HEK293 (cell line): ENCODE measurements at regions of chr11 and their contacts with region 1.

Region 1: DNA sequence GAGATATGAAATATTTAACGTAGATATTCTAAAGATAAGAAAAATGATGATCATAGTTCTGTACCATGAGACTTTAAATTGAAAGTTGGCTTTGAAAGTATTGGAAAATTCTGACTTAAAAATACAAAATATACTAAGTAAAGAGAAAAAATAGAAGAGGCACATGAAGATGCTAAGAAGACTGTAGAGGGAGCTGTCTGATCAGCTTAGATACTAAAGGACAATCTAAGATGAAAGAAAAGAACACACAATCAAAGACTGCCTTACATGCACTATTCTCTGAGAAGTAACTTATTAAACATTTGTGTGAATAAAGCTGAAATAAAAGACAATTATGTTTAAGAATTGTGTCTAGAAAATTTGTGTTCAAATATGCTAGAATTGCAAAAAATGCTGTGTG is 55.1 kb downstream of the RBMXL2 start:
- H3K4me3 ChIP-seq: no peak overlapping the region
- H3K27ac ChIP-seq: no peak overlapping the region
- H3K4me1 ChIP-seq: no peaks in the 10 kb centered on the region
- CTCF ChIP-seq: no peak

Region 2: DNA sequence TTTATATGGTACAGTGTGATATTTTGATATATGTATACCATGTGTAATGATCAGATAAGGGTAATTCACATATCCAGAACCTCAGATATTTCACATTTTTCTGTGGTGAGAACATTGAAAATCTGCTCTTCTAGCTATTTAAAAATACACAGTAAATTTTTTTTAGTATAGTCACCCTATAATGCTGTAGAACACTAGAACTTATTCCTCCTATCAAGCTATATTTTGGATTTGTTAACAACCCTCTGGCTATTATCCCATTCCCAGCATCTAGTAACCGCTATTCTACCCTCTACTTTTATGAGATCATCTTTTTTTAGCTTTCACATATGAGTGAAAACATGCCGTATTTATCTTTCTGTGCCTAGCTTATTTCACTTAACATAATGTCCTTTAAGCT is 42.3 kb after region 1 on chr11:
- CTCF ChIA-PET with region 1: no interaction called
- POLR2A ChIA-PET with region 1: no interaction called
- H3K4me3 ChIP-seq: no peak overlapping the region
- H3K27ac ChIP-seq: no peak overlapping the region
- H3K4me1 ChIP-seq: no peaks in the 10 kb centered on the region
- CTCF ChIP-seq: no peak

Region 3: DNA sequence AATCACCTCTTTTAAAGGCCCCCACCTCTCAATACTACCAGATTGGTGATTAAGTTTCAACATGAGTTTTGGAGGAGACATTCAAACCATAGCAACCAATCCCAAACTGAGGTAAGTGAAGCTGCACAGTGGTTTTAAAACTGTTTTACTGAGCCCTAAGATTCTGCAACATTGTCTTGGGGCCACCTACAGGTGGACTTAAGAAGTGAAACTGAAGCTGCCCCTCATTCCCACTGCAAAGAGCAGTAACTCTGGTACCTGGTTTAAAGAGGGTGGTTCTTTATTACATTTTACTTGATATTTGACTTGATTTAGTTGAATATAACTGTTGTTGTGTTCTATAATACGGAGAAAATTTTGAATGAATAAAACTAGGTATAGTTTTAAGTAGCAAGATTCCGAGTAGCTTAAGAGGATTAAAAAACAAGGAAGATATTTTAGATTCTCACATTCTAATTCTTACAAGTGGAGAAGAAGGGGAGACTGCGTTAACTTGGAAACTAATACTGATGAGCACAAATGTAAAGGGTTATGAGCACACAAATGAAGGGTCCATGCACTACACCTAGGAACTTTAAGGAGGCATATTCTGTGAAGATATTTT is 134.5 kb after region 1 on chr11:
- CTCF ChIA-PET with region 1: interaction called, 25 read pairs
- POLR2A ChIA-PET with region 1: no interaction called
- H3K4me3 ChIP-seq: no peak overlapping the region
- H3K27ac ChIP-seq: no peak overlapping the region
- H3K4me1 ChIP-seq: no peaks in the 10 kb centered on the region
- CTCF ChIP-seq: no peak

Region 4: GRCh38 chr11:7341551-7341950 is 197.6 kb after region 1 on chr11:
- CTCF ChIA-PET with region 1: no interaction called
- POLR2A ChIA-PET with region 1: no interaction called
- H3K4me3 ChIP-seq: no peak overlapping the region
- H3K27ac ChIP-seq: no peak overlapping the region
- H3K4me1 ChIP-seq: no peaks in the 10 kb centered on the region
- CTCF ChIP-seq: no peak